ENCODE measurements at regions of chr14 and their contacts with region 1.

Region 1: DNA sequence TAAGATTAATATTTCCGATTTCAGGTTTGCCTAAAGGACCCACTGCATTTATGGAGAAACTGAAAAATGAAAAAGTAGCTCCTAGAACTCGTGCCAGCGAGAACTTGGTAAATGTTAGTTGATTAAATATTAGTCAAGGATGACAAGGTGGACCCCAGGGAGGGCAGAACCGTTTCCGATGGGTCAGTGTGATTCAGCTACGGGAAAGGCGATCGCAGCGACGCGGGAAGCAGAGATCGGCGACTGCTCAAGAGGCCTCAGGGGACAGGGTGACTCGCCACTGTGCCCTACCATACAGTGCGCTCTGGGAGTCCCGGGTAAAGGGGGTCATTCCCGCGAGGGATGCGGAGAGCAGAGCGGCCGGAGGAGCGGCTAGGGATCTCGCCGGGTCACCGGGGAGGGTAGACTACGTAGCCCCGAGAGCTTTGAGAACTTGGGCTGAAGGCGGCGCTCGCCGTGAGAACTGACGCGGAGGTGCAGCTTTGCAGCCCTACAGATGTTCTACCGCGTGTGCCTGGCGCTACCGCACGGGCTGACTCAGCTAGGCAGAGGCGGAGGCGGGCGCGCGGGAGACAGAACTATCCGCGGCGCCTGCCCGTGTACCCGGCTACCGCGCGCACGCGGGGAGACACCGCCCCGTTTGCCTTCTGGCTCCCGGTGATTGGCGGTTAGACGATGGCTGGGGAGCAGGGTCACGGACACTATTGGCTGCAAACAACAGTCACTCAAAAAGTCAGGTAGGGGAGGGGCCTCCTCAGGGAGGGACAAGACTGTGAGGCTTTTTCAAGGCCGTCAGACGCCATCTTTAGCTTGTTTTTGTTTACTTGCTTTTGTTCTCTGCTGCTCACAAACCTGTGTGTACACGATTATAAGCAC is 3.2 kb downstream of the C14orf93 start:
- DNase-seq: peak; percentile 96
- H3K4me3 Mint-ChIP-seq: peak overlapping the region; percentile 95
- H3K27ac Mint-ChIP-seq: peak overlapping the region; percentile 96
- H3K4me1 Mint-ChIP-seq: peaks cover 18% of the 10 kb centered on the region
- H3K27me3 Mint-ChIP-seq: no peaks in the 10 kb centered on the region
- CTCF ChIP-seq: no peak

Region 2: DNA sequence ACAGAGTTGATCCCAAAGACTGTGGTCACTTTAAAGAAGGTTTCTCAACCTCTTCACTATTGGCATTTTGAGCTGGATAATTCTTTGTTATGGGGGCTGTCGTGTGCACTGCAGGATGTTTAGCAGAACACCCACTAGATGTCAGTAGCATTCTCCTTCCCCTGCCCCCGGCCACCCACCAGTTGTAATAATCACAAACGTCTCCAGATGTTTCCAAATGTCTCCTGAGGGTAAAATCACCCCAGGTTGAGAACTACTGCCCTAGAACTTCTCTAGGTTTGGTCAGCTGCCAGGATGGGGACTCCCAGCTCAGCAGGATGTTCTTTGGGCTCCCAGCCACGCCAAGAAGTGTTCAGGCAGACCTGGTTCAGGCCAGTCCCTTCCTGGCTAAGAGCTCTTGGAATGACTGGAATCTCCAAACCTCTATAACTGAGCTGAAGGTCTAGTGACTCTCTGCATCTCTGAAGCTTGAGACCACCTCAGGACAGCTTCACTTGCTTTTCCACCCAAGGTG is 12.0 kb before region 1 on chr14:
- CTCF ChIA-PET with region 1: interaction called, 28 read pairs
- intact Hi-C with region 1: no loop called
- DNase-seq: no peak
- H3K4me3 Mint-ChIP-seq: no peak overlapping the region
- H3K27ac Mint-ChIP-seq: no peak overlapping the region
- H3K4me1 Mint-ChIP-seq: no peaks in the 10 kb centered on the region
- H3K27me3 Mint-ChIP-seq: no peaks in the 10 kb centered on the region
- CTCF ChIP-seq: peak; percentile 42

Region 3: GRCh38 chr14:23195550-23196101 is 188.8 kb after region 1 on chr14:
- CTCF ChIA-PET with region 1: no interaction called
- intact Hi-C with region 1: no loop called
- DNase-seq: no peak
- H3K4me3 Mint-ChIP-seq: no peak overlapping the region
- H3K27ac Mint-ChIP-seq: no peak overlapping the region
- H3K4me1 Mint-ChIP-seq: no peaks in the 10 kb centered on the region
- H3K27me3 Mint-ChIP-seq: peaks cover 33% of the 10 kb centered on the region
- CTCF ChIP-seq: no peak